Gastrocnemius medialis (tissue), 4 donors: ENCODE measurements at regions of chr22 and their contacts with region 1.

Region 1: GRCh38 chr22:17407643-17408042 is 38.4 kb downstream of the CECR2 start:
- DNase-seq: no peak
- ATAC-seq: peak; percentile 32 to 68
- H3K4me3 ChIP-seq: no peak overlapping the region
- H3K27ac ChIP-seq: peak overlapping the region; percentile 67 to 85 (median 75)
- H3K4me1 ChIP-seq: peaks cover 53 to 59% of the 10 kb centered on the region in 2 donors
- H3K27me3 ChIP-seq: no peaks in the 10 kb centered on the region
- CTCF ChIP-seq: no peak
- POLR2A ChIP-seq: no peak

Region 2: GRCh38 chr22:17443405-17444203 is 36.0 kb after region 1 on chr22:
- in situ Hi-C with region 1: no loop called
- intact Hi-C with region 1: loop called (anchors 5 kb)
- DNase-seq: peak; percentile 29 to 70
- ATAC-seq: peak; percentile 86 to 87
- H3K4me3 ChIP-seq: peak overlapping the region; percentile 42 to 50 (median 42)
- H3K27ac ChIP-seq: peak overlapping the region; percentile 90 to 96 (median 94)
- H3K4me1 ChIP-seq: peaks cover 42 to 60% of the 10 kb centered on the region in 2 donors
- H3K27me3 ChIP-seq: no peaks in the 10 kb centered on the region
- CTCF ChIP-seq: no peak
- POLR2A ChIP-seq: peak in 1 of 2 donors; percentile 71